ENCODE measurements at regions of chr13 and their contacts with region 1.

Region 1: DNA sequence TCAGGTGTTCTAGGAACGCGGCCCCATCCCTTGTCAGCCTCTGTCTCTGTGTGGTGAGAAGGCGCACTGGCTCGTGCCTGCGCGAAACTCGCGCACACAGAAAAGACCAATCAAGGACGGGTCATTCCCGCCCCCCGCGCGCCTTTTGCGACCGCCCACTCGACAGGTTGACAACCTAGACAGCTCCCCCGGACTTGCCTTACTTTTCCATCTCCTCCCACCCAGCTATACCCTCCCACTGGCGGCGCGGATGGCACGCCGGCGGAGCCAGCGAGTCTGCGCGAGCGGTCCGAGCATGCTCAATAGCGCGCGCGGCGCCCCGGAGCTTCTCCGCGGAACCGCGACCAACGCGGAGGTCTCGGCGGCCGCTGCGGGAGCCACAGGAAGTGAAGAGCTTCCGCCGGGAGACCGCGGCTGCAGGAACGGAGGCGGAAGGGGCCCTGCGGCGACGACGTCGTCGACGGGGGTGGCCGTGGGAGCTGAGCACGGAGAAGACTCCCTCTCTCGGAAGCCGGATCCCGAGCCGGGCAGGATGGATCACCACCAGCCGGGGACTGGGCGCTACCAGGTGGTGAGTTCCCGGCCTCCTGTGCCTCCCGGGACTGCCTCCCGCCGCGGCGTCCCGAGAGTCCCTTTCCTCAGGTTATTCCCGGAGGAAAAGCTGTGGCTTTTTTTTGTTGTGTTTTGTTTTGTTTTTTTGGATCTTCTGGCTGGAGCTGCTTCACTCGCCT is at the start of gene NDFIP2:
- DNase-seq: peak; percentile 78 to 91 (median 81)
- H3K4me3 ChIP-seq: peak within 1 kb of the TSS; percentile 52 to 81
- H3K4me3 Mint-ChIP-seq: peak within 1 kb of the TSS; percentile 88 to 96 (median 94)
- H3K27ac ChIP-seq: peak within 1 kb of the TSS; percentile 48
- H3K27ac Mint-ChIP-seq: peak within 1 kb of the TSS; percentile 80 to 93 (median 92)
- H3K4me1 ChIP-seq: peaks cover 22% of the 10 kb centered on the region
- H3K4me1 Mint-ChIP-seq: peaks cover 25 to 42% (median 36%) of the 10 kb centered on the region in 4 donors
- H3K27me3 ChIP-seq: no peaks in the 10 kb centered on the region
- H3K27me3 Mint-ChIP-seq: no peaks in the 10 kb centered on the region
- total RNA-seq, gene NDFIP2: 2.7 to 3.7 TPM

Region 2: DNA sequence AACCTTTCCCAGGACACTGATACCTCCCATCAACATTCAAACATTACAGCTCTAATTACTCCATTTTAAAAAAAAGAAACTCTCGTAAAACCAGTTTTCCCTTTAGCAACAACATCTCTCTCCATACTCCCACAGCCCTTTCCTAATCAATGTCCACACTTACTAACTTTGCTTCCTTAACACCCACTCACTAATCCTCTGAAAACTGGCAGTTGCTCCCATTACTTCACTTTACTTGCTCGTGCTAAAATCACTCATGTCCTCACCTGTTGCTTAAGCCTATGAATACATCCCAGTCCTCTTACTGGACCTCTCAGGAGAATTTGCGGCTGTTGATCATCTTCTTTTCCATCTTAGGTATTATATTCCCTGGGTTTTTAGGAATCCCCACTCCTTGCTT is 119.8 kb before region 1 on chr13:
- CTCF ChIA-PET with region 1: no interaction called
- POLR2A ChIA-PET with region 1: no interaction called
- intact Hi-C with region 1: no loop called
- DNase-seq: no peak
- H3K4me3 ChIP-seq: no peak overlapping the region
- H3K4me3 Mint-ChIP-seq: no peak overlapping the region
- H3K27ac ChIP-seq: no peak overlapping the region
- H3K27ac Mint-ChIP-seq: peak overlapping the region in 4 of 7 donors; percentile 1 to 70 (median 28)
- H3K4me1 ChIP-seq: no peaks in the 10 kb centered on the region
- H3K4me1 Mint-ChIP-seq: peaks cover 8 to 18% (median 10%) of the 10 kb centered on the region in 4 donors
- H3K27me3 ChIP-seq: no peaks in the 10 kb centered on the region
- H3K27me3 Mint-ChIP-seq: no peaks in the 10 kb centered on the region

Region 3: GRCh38 chr13:79382545-79383289 is 98.4 kb before region 1 on chr13:
- CTCF ChIA-PET with region 1: no interaction called
- POLR2A ChIA-PET with region 1: no interaction called
- intact Hi-C with region 1: no loop called
- DNase-seq: no peak
- H3K4me3 ChIP-seq: no peak overlapping the region
- H3K4me3 Mint-ChIP-seq: peak overlapping the region in 6 of 8 donors; percentile 15 to 71 (median 54)
- H3K27ac ChIP-seq: no peak overlapping the region
- H3K27ac Mint-ChIP-seq: peak overlapping the region in 6 of 7 donors; percentile 2 to 70 (median 15)
- H3K4me1 ChIP-seq: peaks cover 59% of the 10 kb centered on the region
- H3K4me1 Mint-ChIP-seq: peaks cover 41 to 62% (median 52%) of the 10 kb centered on the region in 4 donors
- H3K27me3 ChIP-seq: no peaks in the 10 kb centered on the region
- H3K27me3 Mint-ChIP-seq: no peaks in the 10 kb centered on the region

Region 4: DNA sequence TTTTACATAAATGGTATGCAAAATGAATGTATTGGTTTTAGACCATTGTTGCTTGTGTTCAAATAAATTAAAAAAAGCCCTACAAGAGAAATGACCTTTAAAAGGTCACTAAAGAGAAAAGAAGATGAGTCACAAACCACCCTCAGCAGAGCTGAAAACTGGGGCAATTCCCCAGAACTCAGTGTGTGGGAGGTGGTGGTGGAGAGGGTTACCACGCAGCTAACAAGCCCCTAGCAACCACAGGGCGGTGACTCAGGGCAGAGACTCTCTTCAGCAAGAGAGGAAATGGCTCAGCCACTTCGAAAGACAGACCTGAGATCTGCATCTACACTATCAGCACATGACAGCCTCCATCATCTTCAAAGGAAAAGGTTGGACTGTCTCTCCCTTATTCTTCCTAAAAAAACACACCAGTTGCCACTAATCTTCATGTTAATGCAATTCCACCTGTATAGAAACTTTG is 29.6 kb before region 1 on chr13:
- CTCF ChIA-PET with region 1: interaction called, 3 read pairs
- POLR2A ChIA-PET with region 1: interaction called, 16 read pairs
- intact Hi-C with region 1: loop called (anchors 1 kb)
- DNase-seq: peak; percentile 73 to 96 (median 77)
- H3K4me3 ChIP-seq: peak overlapping the region in 1 of 2 donors; percentile 3
- H3K4me3 Mint-ChIP-seq: peak overlapping the region; percentile 17 to 77 (median 76)
- H3K27ac ChIP-seq: peak overlapping the region; percentile 42
- H3K27ac Mint-ChIP-seq: peak overlapping the region; percentile 83 to 98 (median 94)
- H3K4me1 ChIP-seq: peaks cover 45% of the 10 kb centered on the region
- H3K4me1 Mint-ChIP-seq: peaks cover 28 to 66% (median 39%) of the 10 kb centered on the region in 4 donors
- H3K27me3 ChIP-seq: no peaks in the 10 kb centered on the region
- H3K27me3 Mint-ChIP-seq: no peaks in the 10 kb centered on the region

Region 5: GRCh38 chr13:79519255-79519654 is 38.1 kb after region 1 on chr13:
- CTCF ChIA-PET with region 1: interaction called, 3 read pairs
- POLR2A ChIA-PET with region 1: no interaction called
- intact Hi-C with region 1: loop called (anchors 5 kb)
- DNase-seq: no peak
- H3K4me3 ChIP-seq: no peak overlapping the region
- H3K4me3 Mint-ChIP-seq: no peak overlapping the region
- H3K27ac ChIP-seq: no peak overlapping the region
- H3K27ac Mint-ChIP-seq: no peak overlapping the region
- H3K4me1 ChIP-seq: peaks cover 8% of the 10 kb centered on the region
- H3K4me1 Mint-ChIP-seq: peaks cover 8 to 14% (median 9%) of the 10 kb centered on the region in 4 donors
- H3K27me3 ChIP-seq: no peaks in the 10 kb centered on the region
- H3K27me3 Mint-ChIP-seq: no peaks in the 10 kb centered on the region

Region 6: GRCh38 chr13:79541426-79542049 is 60.4 kb after region 1 on chr13:
- CTCF ChIA-PET with region 1: interaction called, 7 read pairs
- POLR2A ChIA-PET with region 1: no interaction called
- intact Hi-C with region 1: loop called (anchors 2 kb)
- DNase-seq: peak in 4 of 5 donors; percentile 59 to 66 (median 62)
- H3K4me3 ChIP-seq: no peak overlapping the region
- H3K4me3 Mint-ChIP-seq: no peak overlapping the region
- H3K27ac ChIP-seq: no peak overlapping the region
- H3K27ac Mint-ChIP-seq: no peak overlapping the region
- H3K4me1 ChIP-seq: no peaks in the 10 kb centered on the region
- H3K4me1 Mint-ChIP-seq: peaks cover 0 to 2% (median 0%) of the 10 kb centered on the region in 4 donors
- H3K27me3 ChIP-seq: no peaks in the 10 kb centered on the region
- H3K27me3 Mint-ChIP-seq: no peaks in the 10 kb centered on the region

Region 7: DNA sequence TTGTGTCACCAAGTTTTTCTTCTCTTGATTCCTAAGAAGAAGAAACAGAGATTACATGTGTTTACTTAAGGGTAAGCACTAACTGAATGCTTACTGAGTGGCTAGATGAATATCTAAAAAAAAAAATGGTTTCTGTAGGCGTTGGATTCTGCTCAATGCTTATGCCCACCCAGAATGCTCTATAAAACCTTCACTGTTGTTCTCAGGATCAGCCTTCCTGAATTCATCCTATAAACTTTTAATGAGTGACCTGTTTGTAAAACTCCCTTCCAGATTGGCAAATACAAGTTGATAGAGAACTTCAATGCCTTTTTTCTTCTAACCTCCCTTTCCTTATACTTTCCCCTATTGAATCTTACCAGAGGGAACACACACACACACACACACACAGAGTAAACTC is 90.0 kb after region 1 on chr13:
- CTCF ChIA-PET with region 1: no interaction called
- POLR2A ChIA-PET with region 1: no interaction called
- intact Hi-C with region 1: no loop called
- DNase-seq: no peak
- H3K4me3 ChIP-seq: no peak overlapping the region
- H3K4me3 Mint-ChIP-seq: no peak overlapping the region
- H3K27ac ChIP-seq: no peak overlapping the region
- H3K27ac Mint-ChIP-seq: no peak overlapping the region
- H3K4me1 ChIP-seq: no peaks in the 10 kb centered on the region
- H3K4me1 Mint-ChIP-seq: no peaks in the 10 kb centered on the region
- H3K27me3 ChIP-seq: no peaks in the 10 kb centered on the region
- H3K27me3 Mint-ChIP-seq: peaks cover 0 to 2% of the 10 kb centered on the region in 2 donors